ENCODE measurements at regions of chr5 and their contacts with region 1.

Region 1: GRCh38 chr5:91225848-91226686 is 157.1 kb downstream of the ARRDC3 start:
- DNase-seq: peak in 1 of 2 experiments; percentile 46
- H3K4me3 ChIP-seq: no peak overlapping the region
- H3K27ac ChIP-seq: no peak overlapping the region
- H3K4me1 ChIP-seq: no peaks in the 10 kb centered on the region
- H3K27me3 ChIP-seq: no peaks in the 10 kb centered on the region
- CTCF ChIP-seq: peak; percentile 65

Region 2: GRCh38 chr5:90932052-90932699 is 293.9 kb before region 1 on chr5:
- CTCF ChIA-PET with region 1: no interaction called
- POLR2A ChIA-PET with region 1: no interaction called
- intact Hi-C with region 1: loop called (anchors 5 kb)
- DNase-seq: peak; percentile 34 to 52
- H3K4me3 ChIP-seq: no peak overlapping the region
- H3K27ac ChIP-seq: peak overlapping the region; percentile 45
- H3K4me1 ChIP-seq: peaks cover 8% of the 10 kb centered on the region
- H3K27me3 ChIP-seq: no peaks in the 10 kb centered on the region
- CTCF ChIP-seq: peak; percentile 73

Measured in PC-9 (cell line).